Dorsolateral prefrontal cortex (tissue), 120 donors: ENCODE measurements at regions of chr22 and their contacts with region 1.

Region 1: DNA sequence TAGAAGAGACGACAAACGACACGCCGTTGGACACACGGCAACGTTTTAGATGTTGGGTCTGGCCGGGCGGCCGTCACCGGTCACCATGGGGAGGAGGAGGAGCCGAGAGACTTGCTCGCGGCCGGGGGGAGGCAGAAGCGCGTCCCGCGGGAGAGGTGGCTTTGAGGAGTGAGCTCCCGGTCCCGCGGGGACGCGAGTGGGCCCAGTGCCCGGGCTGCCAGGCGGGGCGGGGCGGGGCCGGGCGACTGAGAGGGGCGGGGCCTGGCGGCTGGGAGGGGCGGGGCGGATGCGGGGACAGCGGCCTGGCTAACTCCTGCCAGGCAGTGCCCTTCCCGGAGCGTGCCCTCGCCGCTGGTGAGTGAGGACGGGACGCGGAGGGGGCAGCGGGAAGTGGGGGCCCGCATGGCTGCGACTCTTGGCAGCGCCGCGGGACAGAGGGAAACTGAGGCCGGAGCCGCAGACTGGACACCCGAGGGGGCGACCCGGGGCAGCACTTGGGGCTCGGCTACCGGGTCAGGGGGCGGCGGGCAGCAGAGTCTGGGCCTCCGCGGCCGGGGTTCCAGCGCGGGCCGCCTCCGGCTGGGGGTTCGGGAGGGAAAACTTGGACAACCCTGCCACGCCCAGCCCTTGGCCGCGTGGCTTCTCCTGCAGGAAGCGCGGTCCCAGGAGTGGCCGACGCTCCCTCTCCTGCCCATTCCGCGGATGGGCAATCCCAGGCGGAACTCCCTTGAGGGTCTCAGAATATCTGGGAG is at the start of gene TSPO:
- DNase-seq: peak; percentile 16 to 88 (median 70)
- H3K4me3 ChIP-seq: peak within 1 kb of the TSS; percentile 53 to 91 (median 75)
- H3K27ac ChIP-seq: peak within 1 kb of the TSS; percentile 38 to 90 (median 79)
- H3K27me3 ChIP-seq: peaks cover 0 to 11% (median 0%) of the 10 kb centered on the region in 45 donors
- CTCF ChIP-seq: peak in 9 of 56 donors; percentile 3 to 39 (median 21)
- total RNA-seq, gene TSPO: 12.8 to 57.5 (median 25.4) TPM

Region 2: GRCh38 chr22:43187171-43188099 is 36.0 kb after region 1 on chr22:
- intact Hi-C with region 1: loop called (anchors 1 to 2 kb)
- DNase-seq: peak; percentile 90 to 96 (median 93)
- H3K4me3 ChIP-seq: peak overlapping the region; percentile 42 to 89 (median 69)
- H3K27ac ChIP-seq: peak overlapping the region; percentile 42 to 96 (median 89)
- H3K27me3 ChIP-seq: no peaks in the 10 kb centered on the region
- CTCF ChIP-seq: peak; percentile 43 to 85 (median 70)